ENCODE measurements at regions of chr6 and their contacts with region 1.

Region 1: GRCh38 chr6:36360241-36361054 is 23.8 kb upstream of the BNIP5 start:
- DNase-seq: peak; percentile 81
- H3K4me3 ChIP-seq: no peak overlapping the region
- H3K27ac ChIP-seq: no peak overlapping the region
- H3K4me1 ChIP-seq: no peaks in the 10 kb centered on the region
- H3K27me3 ChIP-seq: no peaks in the 10 kb centered on the region
- CTCF ChIP-seq: peak; percentile 78

Region 2: GRCh38 chr6:36302227-36302976 is 58.0 kb before region 1 on chr6:
- intact Hi-C with region 1: loop called (anchors 5 kb)
- DNase-seq: peak; percentile 96
- H3K4me3 ChIP-seq: no peak overlapping the region
- H3K27ac ChIP-seq: no peak overlapping the region
- H3K4me1 ChIP-seq: no peaks in the 10 kb centered on the region
- H3K27me3 ChIP-seq: no peaks in the 10 kb centered on the region
- CTCF ChIP-seq: peak; percentile 94